OCI-LY7 (cell line): ENCODE measurements at regions of chr16 and their contacts with region 1.

Region 1: GRCh38 chr16:4506450-4506849 is 30.3 kb downstream of the HMOX2 start:
- DNase-seq: peak; percentile 83
- H3K4me3 ChIP-seq: no peak overlapping the region
- H3K27ac ChIP-seq: peak overlapping the region; percentile 74
- H3K4me1 ChIP-seq: peaks cover 28% of the 10 kb centered on the region
- CTCF ChIP-seq: peak; percentile 94

Region 2: GRCh38 chr16:4402439-4403132 is 103.9 kb before region 1 on chr16:
- CTCF ChIA-PET with region 1: no interaction called
- POLR2A ChIA-PET with region 1: no interaction called
- intact Hi-C with region 1: no loop called
- DNase-seq: peak; percentile 77
- H3K4me3 ChIP-seq: no peak overlapping the region
- H3K27ac ChIP-seq: no peak overlapping the region
- H3K4me1 ChIP-seq: no peaks in the 10 kb centered on the region
- CTCF ChIP-seq: peak; percentile 87

Region 3: DNA sequence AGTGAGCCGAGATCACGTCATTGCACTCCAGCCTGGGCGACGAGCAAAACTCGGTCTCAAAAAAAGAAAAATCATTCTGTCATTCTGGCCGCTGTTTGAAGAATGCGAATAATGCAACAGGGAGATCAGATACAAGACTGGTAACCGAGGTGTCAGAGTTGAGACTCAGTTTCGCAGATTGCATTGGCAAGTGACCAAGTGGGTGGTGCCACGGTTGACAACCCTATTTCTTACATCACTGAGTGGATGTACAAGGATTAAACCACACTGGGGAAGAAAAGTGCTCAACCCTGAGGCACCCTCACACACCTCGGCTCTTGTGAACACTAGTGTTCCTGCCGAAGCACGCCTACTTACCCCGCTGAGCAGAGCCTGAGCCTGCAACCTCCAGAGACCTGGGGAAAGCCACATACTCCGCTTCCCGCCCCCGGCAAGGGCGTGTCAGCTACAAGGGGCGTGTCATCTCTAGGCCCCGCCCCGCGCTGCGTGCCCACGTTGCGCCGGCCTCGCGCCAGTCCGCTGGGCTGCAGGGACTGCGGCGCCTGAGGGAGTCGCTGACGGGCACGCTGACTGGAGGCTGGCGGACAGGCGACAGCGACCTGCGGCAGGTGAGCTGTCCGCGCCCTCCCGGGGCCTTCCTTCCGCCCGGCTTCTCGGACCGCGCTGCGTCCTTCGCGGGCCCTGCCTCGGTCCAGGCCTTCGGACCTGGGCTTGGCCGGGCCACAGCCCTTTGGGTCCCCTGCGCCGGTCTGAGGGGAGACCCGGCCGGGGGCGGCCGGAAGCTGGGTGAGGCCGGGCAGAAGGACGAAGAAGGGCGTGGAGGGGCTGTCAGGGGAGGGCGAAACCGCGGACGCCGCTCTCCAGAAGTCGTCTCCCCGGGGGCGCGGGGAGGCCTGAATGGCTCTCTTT is 30.3 kb before region 1 on chr16 and contains the start of gene HMOX2:
- CTCF ChIA-PET with region 1: interaction called, 3 read pairs
- POLR2A ChIA-PET with region 1: no interaction called
- intact Hi-C with region 1: loop called (anchors 1 kb)
- DNase-seq: peak; percentile 96
- H3K4me3 ChIP-seq: peak within 1 kb of the TSS; percentile 97
- H3K27ac ChIP-seq: peak within 1 kb of the TSS; percentile 78
- H3K4me1 ChIP-seq: peaks cover 34% of the 10 kb centered on the region
- CTCF ChIP-seq: peak; percentile 62
- total RNA-seq, gene HMOX2: 46.0 and 55.2 TPM in 2 replicates

Region 4: GRCh38 chr16:4548124-4548523 is 41.7 kb after region 1 on chr16:
- CTCF ChIA-PET with region 1: interaction called, 16 read pairs
- POLR2A ChIA-PET with region 1: interaction called, 7 read pairs
- intact Hi-C with region 1: loop called (anchors 1 kb)
- DNase-seq: no peak
- H3K4me3 ChIP-seq: no peak overlapping the region
- H3K27ac ChIP-seq: no peak overlapping the region
- H3K4me1 ChIP-seq: peaks cover 27% of the 10 kb centered on the region
- CTCF ChIP-seq: no peak

Region 5: DNA sequence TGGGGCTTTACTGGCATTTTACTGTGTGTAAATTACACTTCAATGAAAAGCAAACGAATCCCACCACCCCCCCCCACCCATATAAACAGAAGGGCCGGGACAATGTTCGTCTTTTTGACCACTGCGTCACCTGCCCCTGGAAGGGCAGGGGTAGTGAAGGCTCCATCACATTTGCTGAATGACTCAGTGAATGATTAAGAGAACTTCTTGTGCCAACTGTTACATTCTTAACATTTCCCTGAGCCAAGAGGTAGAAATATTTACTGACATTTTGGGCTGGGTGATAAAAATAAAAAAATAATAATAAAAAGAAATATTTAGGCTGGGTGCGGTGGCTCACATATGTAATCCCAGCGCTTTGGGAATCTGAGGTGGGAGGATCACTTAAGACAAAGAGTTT is 73.8 kb after region 1 on chr16:
- CTCF ChIA-PET with region 1: interaction called, 5 read pairs
- POLR2A ChIA-PET with region 1: interaction called, 3 read pairs
- intact Hi-C with region 1: loop called (anchors 1 kb)
- DNase-seq: no peak
- H3K4me3 ChIP-seq: no peak overlapping the region
- H3K27ac ChIP-seq: no peak overlapping the region
- H3K4me1 ChIP-seq: no peaks in the 10 kb centered on the region
- CTCF ChIP-seq: no peak

Region 6: DNA sequence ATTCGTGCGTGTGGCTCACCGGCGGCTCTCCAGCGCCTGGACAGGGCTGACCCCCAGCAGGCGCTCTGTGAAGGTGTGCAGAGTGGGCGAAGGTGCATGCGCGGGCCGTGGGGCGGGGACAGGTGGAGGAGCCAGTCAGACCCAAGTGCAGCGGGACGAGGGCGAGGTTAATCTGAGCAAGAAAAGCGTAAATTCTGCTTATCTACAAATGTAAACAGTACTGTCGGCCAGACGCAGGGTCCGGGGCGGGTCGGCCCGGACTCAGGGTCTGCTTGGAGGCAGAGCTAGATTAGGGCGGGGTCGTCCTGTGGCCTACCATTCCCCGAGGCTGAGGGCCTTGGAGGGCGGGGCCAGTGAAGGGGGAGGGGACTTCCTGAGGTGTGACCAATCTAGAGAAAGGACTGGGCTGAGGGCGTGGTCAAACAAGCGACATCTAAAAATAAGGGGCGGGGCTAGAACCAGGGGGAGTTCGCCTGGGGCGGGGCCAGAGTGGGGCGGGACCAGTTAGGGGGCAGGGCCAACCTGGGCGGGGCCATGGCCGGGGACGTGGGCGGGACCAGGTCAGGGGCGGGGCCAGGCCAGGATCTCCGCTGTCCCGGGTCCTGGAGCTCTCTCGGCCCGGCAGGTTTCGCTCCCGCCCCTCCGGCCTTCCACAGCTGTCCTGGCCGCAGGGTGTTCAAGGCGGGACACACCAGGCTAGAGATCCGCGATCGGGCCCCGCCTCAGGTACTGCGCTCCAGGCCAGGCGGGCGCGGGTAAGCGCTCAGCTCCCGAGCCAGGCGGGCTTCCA is 451.5 kb after region 1 on chr16 and contains the start of gene SEC14L5:
- CTCF ChIA-PET with region 1: no interaction called
- POLR2A ChIA-PET with region 1: no interaction called
- intact Hi-C with region 1: loop called (anchors 5 kb)
- DNase-seq: peak; percentile 98
- H3K4me3 ChIP-seq: peak within 1 kb of the TSS; percentile 56
- H3K27ac ChIP-seq: no peak within 1 kb of the TSS
- H3K4me1 ChIP-seq: peaks cover 3% of the 10 kb centered on the region
- CTCF ChIP-seq: 0 out of 2 replicates have a peak, but pooled peaks have one; percentile 19
- total RNA-seq, gene SEC14L5: not detected in 2 replicates